Psoas muscle (tissue), 8 donors: ENCODE measurements at regions of chr3 and their contacts with region 1.

Region 1: GRCh38 chr3:117019082-117019713 is 309.6 kb downstream of the TUSC7 start:
- DNase-seq: peak in 1 of 2 donors; percentile 30
- ATAC-seq: peak in 3 of 4 donors; percentile 33 to 77 (median 61)
- H3K4me3 ChIP-seq: no peak overlapping the region
- H3K27ac ChIP-seq: no peak overlapping the region
- H3K4me1 ChIP-seq: no peaks in the 10 kb centered on the region
- H3K27me3 ChIP-seq: no peaks in the 10 kb centered on the region
- CTCF ChIP-seq: peak; percentile 67

Region 2: GRCh38 chr3:117997201-117998049 is 978.2 kb after region 1 on chr3:
- intact Hi-C with region 1: loop called in 1 of 2 experiments (anchors 10 kb)
- DNase-seq: peak; percentile 58 to 77
- ATAC-seq: peak; percentile 57 to 89 (median 81)
- H3K4me3 ChIP-seq: peak overlapping the region; percentile 59
- H3K27ac ChIP-seq: no peak overlapping the region
- H3K4me1 ChIP-seq: peaks cover 4% of the 10 kb centered on the region
- H3K27me3 ChIP-seq: peaks cover 0 to 26% (median 3%) of the 10 kb centered on the region in 3 donors
- CTCF ChIP-seq: peak; percentile 58